Right cardiac atrium (tissue), 5 donors: ENCODE measurements at regions of chr5 and their contacts with region 1.

Region 1: GRCh38 chr5:52360985-52361384 is 426.7 kb upstream of the ITGA1 start:
- DNase-seq: no peak
- ATAC-seq: no peak
- H3K4me3 ChIP-seq: no peak overlapping the region
- H3K27ac ChIP-seq: no peak overlapping the region
- H3K4me1 ChIP-seq: no peaks in the 10 kb centered on the region
- H3K27me3 ChIP-seq: no peaks in the 10 kb centered on the region

Region 2: DNA sequence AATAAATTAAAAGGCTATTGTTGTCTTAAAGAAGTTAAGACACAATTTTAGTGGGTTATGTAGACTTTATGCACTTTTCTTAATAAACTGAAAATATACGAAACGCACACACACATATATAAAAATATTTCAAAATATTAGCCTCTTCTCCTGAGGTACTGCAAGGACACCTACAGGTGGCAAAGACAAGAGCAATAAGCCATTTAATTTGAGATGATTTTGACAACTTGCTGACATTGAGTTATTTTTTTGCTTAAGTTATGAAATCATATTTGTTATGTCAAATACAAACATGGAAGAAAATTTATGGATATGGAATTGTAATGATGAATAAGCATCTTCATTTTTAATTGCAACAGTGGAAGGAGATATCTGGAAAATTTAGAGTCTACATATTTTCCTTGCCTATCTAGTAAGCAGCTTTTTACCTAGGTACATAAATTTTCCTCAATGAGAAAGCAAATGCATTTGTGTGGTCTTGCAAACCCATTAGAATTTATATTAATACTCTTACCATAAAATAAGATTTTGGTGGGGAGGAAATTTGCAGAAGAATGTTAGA is 676.1 kb before region 1 on chr5:
- intact Hi-C with region 1: loop called in 1 of 4 experiments (anchors 10 kb)
- DNase-seq: no peak
- ATAC-seq: no peak
- H3K4me3 ChIP-seq: no peak overlapping the region
- H3K27ac ChIP-seq: no peak overlapping the region
- H3K4me1 ChIP-seq: no peaks in the 10 kb centered on the region
- H3K27me3 ChIP-seq: no peaks in the 10 kb centered on the region